ENCODE measurements at regions of chr3 and their contacts with region 1.

Region 1: DNA sequence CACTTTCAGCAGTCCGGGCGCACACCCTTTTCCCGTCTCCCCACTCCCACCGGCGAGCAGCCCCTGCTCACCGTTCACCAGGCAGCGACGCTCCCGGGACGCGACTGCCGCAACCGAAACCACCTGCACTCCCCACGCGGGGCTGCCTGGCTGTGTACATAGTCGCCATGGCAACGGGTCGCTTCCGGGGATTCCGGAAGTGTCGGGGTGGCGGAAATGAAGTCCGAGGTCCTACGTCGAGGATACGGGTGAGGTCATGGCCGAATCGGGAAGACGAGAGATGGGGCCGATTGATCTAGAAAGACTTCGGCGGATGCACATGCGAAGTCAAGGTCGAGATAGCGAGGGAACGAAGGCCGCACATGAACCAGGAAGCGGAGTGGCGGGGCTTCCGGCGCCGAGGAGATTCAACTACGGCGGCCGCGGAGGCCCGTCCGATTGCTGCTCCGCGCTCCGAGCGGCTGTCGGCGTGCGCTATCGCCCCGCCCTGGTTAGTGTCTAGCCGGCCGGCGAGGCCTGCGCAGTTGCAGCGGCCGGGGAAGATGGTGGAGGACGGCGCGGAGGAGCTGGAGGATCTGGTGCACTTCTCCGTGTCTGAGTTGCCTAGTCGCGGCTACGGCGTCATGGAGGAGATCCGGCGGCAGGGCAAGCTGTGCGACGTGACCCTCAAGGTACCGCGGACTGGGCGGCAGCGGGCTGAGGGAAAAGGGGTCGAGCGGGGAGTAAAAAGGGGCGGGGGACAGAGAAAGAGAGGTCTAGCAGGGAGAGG is at the starts of genes KIF9 and KLHL18:
- DNase-seq: peak; percentile 89 to 95 (median 94)
- H3K4me3 ChIP-seq: peak within 1 kb of the TSS; percentile 68 to 99 (median 87)
- H3K27ac ChIP-seq: peak within 1 kb of the TSS; percentile 63 to 99 (median 94)
- H3K27me3 ChIP-seq: no peaks in the 10 kb centered on the region
- CTCF ChIP-seq: peak in 46 of 56 donors; percentile 14 to 70 (median 39)
- total RNA-seq, gene KIF9: 3.1 to 15.9 (median 8.8) TPM
- total RNA-seq, gene KLHL18: 19.8 to 62.3 (median 38.0) TPM

Region 2: DNA sequence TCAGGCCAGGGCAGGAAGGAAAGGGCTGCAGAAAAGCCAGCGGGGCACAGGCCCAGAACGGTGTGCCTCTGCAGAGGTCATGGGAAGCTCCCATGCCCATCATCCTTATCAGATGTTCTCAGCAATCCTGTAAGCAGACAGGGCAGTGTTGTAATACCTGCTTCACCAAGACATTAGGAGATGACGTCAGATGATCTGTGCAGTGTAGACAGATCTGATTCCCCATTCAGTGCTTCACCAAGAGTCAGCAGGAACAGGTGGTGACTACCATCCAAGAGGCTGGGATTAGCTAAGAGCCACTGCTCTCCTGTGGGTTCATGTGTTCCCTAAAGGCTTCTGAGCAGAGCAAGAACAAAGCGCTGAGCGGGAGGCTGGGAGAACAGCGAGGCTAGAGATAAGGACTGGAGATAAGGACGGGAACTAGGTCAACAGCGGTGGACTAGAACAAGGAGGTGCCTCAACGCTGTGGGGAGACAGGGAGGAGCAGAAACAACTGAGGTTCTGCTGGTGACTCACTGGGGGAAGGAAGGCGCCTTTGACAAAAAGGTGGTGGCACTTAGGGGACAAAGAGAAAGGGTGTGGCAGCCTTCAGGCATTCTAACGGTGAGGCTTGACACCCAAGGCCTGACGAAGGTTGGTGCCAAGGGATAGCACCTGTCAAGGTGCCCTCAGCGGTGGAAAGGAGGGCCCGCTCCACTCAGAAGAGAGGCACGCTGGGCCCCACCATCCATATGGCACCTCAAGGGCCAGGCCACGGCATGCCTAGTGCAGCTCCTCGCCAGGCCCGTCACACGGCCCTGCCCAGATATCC is 334.4 kb before region 1 on chr3:
- intact Hi-C with region 1: no loop called
- DNase-seq: no peak
- H3K4me3 ChIP-seq: no peak overlapping the region
- H3K27ac ChIP-seq: peak overlapping the region in 21 of 59 donors; percentile 1 to 63 (median 40)
- H3K27me3 ChIP-seq: no peaks in the 10 kb centered on the region
- CTCF ChIP-seq: no peak

Region 3: GRCh38 chr3:47186285-47186684 is 96.3 kb before region 1 on chr3:
- intact Hi-C with region 1: no loop called
- DNase-seq: no peak
- H3K4me3 ChIP-seq: no peak overlapping the region
- H3K27ac ChIP-seq: no peak overlapping the region
- H3K27me3 ChIP-seq: no peaks in the 10 kb centered on the region
- CTCF ChIP-seq: no peak

Region 4: GRCh38 chr3:47243419-47244147 is 39.0 kb before region 1 on chr3:
- intact Hi-C with region 1: no loop called
- DNase-seq: no peak
- H3K4me3 ChIP-seq: no peak overlapping the region
- H3K27ac ChIP-seq: no peak overlapping the region
- H3K27me3 ChIP-seq: no peaks in the 10 kb centered on the region
- CTCF ChIP-seq: no peak

Region 5: DNA sequence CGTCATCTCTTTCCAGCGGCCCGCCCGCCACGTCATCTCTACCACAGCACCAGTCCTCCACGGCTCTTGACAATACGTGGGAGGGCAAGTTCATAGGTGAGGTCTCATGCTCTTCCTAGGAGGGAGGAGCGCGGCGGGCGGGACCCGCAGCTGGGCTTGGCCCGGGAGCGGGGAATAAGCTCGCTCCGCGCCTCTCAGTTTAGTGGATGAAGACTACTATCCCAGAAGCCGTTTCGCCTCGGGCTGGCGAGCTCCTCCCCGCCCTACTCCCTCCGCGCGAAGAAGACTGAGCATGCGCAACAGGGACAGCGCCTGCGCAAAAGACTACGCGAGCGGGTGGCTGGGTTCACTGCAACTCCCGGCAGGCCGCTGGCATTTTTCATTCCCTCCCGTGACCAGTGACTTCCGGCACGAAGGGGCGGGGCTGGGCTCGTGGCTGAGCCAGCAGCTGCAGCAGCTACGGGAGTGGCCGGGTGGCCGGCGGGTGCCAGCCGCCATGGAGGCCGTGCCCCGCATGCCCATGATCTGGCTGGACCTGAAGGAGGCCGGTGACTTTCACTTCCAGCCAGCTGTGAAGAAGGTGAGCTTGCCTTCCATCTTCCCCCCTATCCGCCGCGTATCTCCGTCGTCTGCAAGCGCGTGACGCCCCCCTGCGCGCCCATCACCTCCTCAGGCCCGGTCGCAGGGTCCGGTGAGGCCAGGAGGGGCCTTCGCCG is 98.2 kb after region 1 on chr3 and contains the start of gene PTPN23:
- intact Hi-C with region 1: loop called (anchors 2 to 5 kb)
- DNase-seq: peak; percentile 93 to 99 (median 96)
- H3K4me3 ChIP-seq: peak within 1 kb of the TSS; percentile 55 to 100 (median 91)
- H3K27ac ChIP-seq: peak within 1 kb of the TSS; percentile 25 to 98 (median 93)
- H3K27me3 ChIP-seq: no peaks in the 10 kb centered on the region
- CTCF ChIP-seq: peak in 30 of 56 donors; percentile 6 to 57 (median 30)
- total RNA-seq, gene PTPN23: 40.8 to 75.9 (median 53.6) TPM

Measured in dorsolateral prefrontal cortex (tissue), 120 donors.